ENCODE measurements at regions of chr10 and their contacts with region 1.

Region 1: DNA sequence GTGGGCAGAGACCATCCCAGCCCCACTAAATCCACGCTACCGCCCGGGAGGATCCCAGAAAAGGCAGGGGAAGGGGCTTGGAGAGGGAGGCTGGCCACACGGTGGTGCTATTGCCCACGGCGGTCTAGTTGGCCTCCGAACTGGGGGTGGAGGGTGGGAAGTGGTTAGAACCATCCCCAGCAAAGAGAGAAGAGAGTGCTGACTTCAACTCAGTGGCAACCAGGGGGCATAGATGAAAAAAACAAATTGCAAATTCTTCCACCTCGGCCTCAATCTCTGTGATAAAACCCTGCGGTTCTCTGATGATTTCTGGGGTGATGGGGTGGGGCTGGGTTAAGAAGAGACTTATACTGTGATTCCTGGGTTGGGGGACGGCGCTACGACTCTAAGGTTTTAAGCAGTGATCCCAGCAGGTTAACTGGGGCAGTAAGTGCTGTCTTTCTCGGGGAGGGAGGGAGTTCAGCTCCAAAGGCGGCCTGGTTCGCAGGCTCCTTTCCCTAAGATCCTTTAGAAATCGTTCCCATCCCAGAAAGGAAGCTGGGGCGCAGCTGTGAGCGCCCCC is 154.5 kb upstream of the LYZL2 start:
- DNase-seq: peak; percentile 92 to 97
- ATAC-seq: peak; percentile 92
- H3K4me3 ChIP-seq: peak overlapping the region; percentile 61 to 83
- H3K27ac ChIP-seq: peak overlapping the region; percentile 90 to 97
- H3K4me1 ChIP-seq: no peaks in the 10 kb centered on the region
- H3K27me3 ChIP-seq: no peaks in the 10 kb centered on the region

Region 2: DNA sequence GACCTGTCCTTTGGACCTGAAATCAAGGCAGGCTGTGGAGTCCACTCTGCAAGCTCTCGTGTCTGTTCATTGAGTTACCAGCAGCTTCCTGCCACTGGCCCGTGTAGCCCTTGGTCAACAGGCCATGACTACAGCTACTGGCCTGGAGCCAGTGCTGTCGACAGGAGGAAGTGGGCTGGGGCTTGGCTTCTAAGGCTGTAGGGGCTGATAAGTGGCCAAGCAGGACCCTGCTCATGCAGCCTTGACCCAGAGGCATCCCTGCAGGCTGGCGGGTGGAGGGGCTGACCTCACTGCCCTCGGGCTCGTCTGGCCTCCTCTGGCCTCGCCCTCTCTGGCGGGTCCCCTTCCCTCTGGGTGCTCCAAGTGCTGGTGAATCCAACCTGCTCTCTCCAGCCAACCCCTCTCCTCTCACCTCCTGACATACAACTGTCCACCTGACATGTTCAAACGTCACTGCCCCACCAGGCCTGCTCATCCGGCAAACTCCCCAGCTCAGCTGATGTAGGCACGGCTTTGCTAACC is 34.1 kb after region 1 on chr10:
- intact Hi-C with region 1: loop called in 1 of 2 experiments (anchors 2 kb)
- DNase-seq: peak; percentile 87 to 88
- ATAC-seq: peak; percentile 20
- H3K4me3 ChIP-seq: no peak overlapping the region
- H3K27ac ChIP-seq: peak overlapping the region; percentile 89
- H3K4me1 ChIP-seq: peaks cover 2% of the 10 kb centered on the region in 2 donors
- H3K27me3 ChIP-seq: no peaks in the 10 kb centered on the region

Region 3: GRCh38 chr10:31031558-31032257 is 247.7 kb after region 1 on chr10 and contains the start of gene ZNF438:
- intact Hi-C with region 1: loop called in 1 of 2 experiments (anchors 2 kb)
- DNase-seq: peak; percentile 97 to 99
- ATAC-seq: peak; percentile 98
- H3K4me3 ChIP-seq: peak within 1 kb of the TSS; percentile 28 to 47
- H3K27ac ChIP-seq: peak within 1 kb of the TSS; percentile 95 to 97
- H3K4me1 ChIP-seq: peaks cover 2 to 4% of the 10 kb centered on the region in 2 donors
- H3K27me3 ChIP-seq: no peaks in the 10 kb centered on the region
- total RNA-seq, gene ZNF438: 11.6 to 16.5 TPM

Region 4: GRCh38 chr10:31490858-31491504 is 707.0 kb after region 1 on chr10:
- intact Hi-C with region 1: loop called (anchors 10 kb)
- DNase-seq: no peak
- ATAC-seq: peak; percentile 22
- H3K4me3 ChIP-seq: no peak overlapping the region
- H3K27ac ChIP-seq: no peak overlapping the region
- H3K4me1 ChIP-seq: no peaks in the 10 kb centered on the region
- H3K27me3 ChIP-seq: no peaks in the 10 kb centered on the region

Region 5: GRCh38 chr10:31808258-31809218 is 1024.5 kb after region 1 on chr10:
- intact Hi-C with region 1: loop called in 1 of 2 experiments (anchors 10 kb)
- DNase-seq: peak in 1 of 2 donors; percentile 64
- ATAC-seq: peak; percentile 80
- H3K4me3 ChIP-seq: no peak overlapping the region
- H3K27ac ChIP-seq: no peak overlapping the region
- H3K4me1 ChIP-seq: no peaks in the 10 kb centered on the region
- H3K27me3 ChIP-seq: no peaks in the 10 kb centered on the region

Measured in aorta (tissue), 5 donors.